Sigmoid colon (tissue), 7 donors: ENCODE measurements at regions of chr4 and their contacts with region 1.

Region 1: GRCh38 chr4:85928775-85929591 is 430.9 kb downstream of the MAPK10 start:
- DNase-seq: no peak
- H3K4me3 ChIP-seq: no peak overlapping the region
- H3K27ac ChIP-seq: no peak overlapping the region
- H3K4me1 ChIP-seq: peaks cover 0 to 14% (median 5%) of the 10 kb centered on the region in 4 donors
- H3K27me3 ChIP-seq: no peaks in the 10 kb centered on the region
- CTCF ChIP-seq: no peak
- EP300 ChIP-seq: no peak
- POLR2A ChIP-seq: no peak

Region 2: DNA sequence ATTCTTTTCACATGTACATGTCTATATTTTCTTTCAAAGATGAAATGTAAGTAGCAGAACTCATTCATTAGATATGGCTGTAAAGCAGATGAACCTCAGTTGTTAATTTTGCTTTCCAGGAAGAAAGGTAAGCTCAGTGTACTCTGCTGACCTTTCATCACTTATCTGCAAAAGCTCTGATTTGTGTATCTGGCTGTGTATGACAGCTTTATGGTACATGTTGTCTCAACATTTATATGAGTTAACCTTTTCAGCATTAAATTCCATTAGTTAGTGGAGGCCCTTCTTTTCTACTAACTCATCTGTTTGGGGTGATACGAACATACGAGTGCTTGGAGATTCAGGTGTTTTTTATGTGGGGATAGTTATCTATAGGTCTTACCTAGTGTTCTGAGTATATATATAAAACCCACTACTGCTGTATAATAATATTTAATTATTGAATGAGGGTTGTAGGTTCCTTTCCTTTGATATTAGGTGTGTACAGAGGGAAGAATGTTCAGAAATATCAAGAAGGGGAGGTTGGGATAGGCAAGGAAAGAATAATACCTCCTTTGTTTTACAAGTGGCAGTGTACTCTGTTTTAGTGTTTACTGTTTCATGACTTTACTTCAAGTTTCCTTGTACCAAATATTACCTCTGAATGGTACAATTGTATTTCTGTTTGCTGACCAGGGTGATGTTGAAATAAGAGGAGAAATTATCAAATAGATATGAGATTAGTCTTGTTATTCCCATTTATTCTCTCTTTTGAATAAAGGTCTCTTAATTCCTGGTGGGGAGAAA is 58.5 kb before region 1 on chr4:
- intact Hi-C with region 1: loop called (anchors 2 kb)
- DNase-seq: no peak
- H3K4me3 ChIP-seq: no peak overlapping the region
- H3K27ac ChIP-seq: no peak overlapping the region
- H3K4me1 ChIP-seq: peaks cover 0 to 15% (median 3%) of the 10 kb centered on the region in 4 donors
- H3K27me3 ChIP-seq: no peaks in the 10 kb centered on the region
- CTCF ChIP-seq: no peak
- EP300 ChIP-seq: no peak
- POLR2A ChIP-seq: no peak